Caco-2 (cell line): ENCODE measurements at regions of chr10 and their contacts with region 1.

Region 1: DNA sequence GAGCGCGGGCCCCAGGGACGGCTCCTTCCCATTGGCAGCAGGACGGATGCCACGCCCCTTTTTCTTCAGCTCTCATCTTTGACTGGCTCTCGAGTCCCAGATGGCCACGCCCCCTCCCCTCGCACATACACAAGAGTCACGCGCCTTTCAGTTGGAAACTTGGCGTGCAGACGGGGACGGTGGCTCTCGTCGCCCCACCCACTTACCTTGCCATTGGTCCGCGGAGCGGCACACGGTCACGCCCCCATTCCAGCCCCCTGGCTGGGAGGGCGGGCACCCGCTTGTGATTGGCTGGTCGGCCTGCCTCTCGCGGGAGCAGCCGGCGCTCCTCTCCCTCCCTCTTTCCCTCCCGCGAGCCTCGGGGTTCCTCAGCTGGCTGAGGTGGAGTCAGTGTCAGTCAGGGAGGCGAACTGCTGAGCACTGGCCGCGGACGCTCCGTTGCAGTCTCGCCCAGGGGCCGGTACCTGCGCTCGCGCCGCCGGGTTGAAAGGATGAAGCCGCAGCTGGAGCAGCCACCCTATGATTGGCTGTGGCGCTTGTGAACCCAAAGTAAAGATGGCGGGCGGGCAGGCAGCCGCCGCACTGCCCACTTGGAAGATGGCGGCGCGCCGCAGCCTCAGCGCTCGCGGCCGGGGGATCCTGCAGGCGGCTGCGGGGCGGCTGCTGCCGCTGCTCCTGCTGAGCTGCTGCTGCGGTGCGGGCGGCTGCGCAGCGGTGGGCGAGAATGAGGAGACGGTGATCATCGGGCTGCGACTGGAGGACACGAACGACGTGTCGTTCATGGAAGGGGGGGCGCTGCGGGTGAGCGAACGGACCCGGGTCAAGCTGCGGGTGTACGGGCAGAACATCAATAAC is at the start of gene CNNM2:
- DNase-seq: peak; percentile 100
- H3K4me3 ChIP-seq: peak within 1 kb of the TSS; percentile 87
- H3K4me3 Mint-ChIP-seq: peak within 1 kb of the TSS; percentile 74
- H3K27ac Mint-ChIP-seq: peak within 1 kb of the TSS; percentile 91
- H3K4me1 ChIP-seq: peaks cover 5% of the 10 kb centered on the region
- H3K4me1 Mint-ChIP-seq: peaks cover 24% of the 10 kb centered on the region
- H3K27me3 ChIP-seq: no peaks in the 10 kb centered on the region
- H3K27me3 Mint-ChIP-seq: no peaks in the 10 kb centered on the region
- CTCF ChIP-seq: no peak
- total RNA-seq, gene CNNM2: 14.1 and 16.1 TPM in 2 replicates

Region 2: GRCh38 chr10:101961591-101962498 is 956.3 kb before region 1 on chr10:
- CTCF ChIA-PET with region 1: no interaction called
- POLR2A ChIA-PET with region 1: no interaction called
- intact Hi-C with region 1: no loop called
- DNase-seq: no peak
- H3K4me3 ChIP-seq: no peak overlapping the region
- H3K4me3 Mint-ChIP-seq: no peak overlapping the region
- H3K27ac Mint-ChIP-seq: no peak overlapping the region
- H3K4me1 ChIP-seq: no peaks in the 10 kb centered on the region
- H3K4me1 Mint-ChIP-seq: no peaks in the 10 kb centered on the region
- H3K27me3 ChIP-seq: no peaks in the 10 kb centered on the region
- H3K27me3 Mint-ChIP-seq: no peaks in the 10 kb centered on the region
- CTCF ChIP-seq: no peak

Region 3: GRCh38 chr10:102467971-102468438 is 450.2 kb before region 1 on chr10:
- CTCF ChIA-PET with region 1: no interaction called
- POLR2A ChIA-PET with region 1: no interaction called
- intact Hi-C with region 1: no loop called
- DNase-seq: no peak
- H3K4me3 ChIP-seq: no peak overlapping the region
- H3K4me3 Mint-ChIP-seq: no peak overlapping the region
- H3K27ac Mint-ChIP-seq: no peak overlapping the region
- H3K4me1 ChIP-seq: peaks cover 11% of the 10 kb centered on the region
- H3K4me1 Mint-ChIP-seq: peaks cover 10% of the 10 kb centered on the region
- H3K27me3 ChIP-seq: no peaks in the 10 kb centered on the region
- H3K27me3 Mint-ChIP-seq: no peaks in the 10 kb centered on the region
- CTCF ChIP-seq: no peak

Region 4: DNA sequence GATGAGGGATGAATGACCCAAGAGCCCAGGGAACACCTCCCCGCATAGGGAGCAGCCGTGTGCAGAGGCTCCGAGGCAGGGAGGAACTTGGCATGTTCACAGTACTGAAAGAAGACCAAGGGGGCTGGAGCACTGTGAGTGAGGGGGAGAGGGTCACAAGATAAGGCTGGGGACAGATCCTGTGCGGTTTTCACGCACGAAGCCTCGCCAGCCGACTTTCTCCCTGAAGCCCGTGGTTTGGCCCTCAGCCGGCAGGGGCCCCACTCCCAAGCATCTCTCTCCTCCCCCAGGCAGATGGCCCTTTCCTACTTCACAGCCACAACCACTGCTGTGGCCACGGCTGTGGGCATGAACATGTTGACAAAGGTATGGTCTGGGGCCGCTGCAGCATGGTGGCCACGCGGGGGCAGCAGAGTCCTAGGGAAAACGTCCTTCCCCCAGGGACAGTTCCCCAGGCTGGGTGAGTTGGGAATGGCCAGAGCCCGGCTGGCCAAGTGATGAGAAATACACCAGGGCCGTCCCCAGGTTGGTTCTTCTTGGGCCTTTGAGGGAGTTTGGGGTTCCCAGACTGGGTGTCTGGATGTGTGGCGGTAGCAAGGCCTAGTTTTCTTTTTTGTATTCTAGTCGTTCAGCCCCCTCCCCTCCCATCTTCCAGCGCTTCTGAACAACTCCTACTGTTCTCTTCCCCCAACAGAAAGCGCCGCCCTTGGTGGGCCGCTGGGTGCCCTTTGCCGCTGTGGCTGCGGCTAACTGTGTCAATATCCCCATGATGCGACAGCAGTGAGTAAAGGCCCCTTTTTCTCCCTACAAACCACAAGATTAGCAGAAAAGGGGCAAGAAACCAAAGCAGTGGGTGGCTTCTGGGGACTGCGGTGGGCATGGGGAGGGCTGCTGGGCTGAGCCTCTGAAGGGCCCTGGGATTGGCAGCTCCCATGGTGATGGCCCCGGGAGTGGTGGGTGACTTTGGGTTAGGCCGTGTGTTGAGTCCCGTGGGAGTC is 188.9 kb before region 1 on chr10:
- CTCF ChIA-PET with region 1: no interaction called
- POLR2A ChIA-PET with region 1: interaction called, 5 read pairs
- intact Hi-C with region 1: loop called (anchors 1 kb)
- DNase-seq: peak; percentile 77 to 88
- H3K4me3 ChIP-seq: no peak overlapping the region
- H3K4me3 Mint-ChIP-seq: no peak overlapping the region
- H3K27ac Mint-ChIP-seq: peak overlapping the region; percentile 5
- H3K4me1 ChIP-seq: no peaks in the 10 kb centered on the region
- H3K4me1 Mint-ChIP-seq: no peaks in the 10 kb centered on the region
- H3K27me3 ChIP-seq: no peaks in the 10 kb centered on the region
- H3K27me3 Mint-ChIP-seq: no peaks in the 10 kb centered on the region
- CTCF ChIP-seq: peak; percentile 91 to 95

Region 5: DNA sequence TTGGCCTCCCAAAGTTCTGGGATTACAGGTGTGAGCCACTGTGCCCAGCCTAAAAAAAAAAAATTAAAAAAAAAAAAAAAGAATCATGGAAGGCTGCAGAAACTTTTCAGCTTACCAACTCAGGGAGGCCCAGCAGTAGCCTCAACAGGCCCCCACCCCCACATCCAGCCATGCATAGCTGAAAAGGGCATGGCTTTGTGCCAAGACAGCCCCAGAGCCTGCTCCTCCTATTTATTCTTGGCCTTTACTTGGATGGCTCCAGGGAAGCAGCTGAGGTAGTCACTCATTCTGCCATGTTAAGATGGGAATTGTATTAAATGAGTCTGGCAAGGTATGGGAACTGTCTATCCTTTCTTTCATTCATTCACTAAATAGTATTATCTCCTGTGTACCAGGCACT is 13.8 kb before region 1 on chr10:
- CTCF ChIA-PET with region 1: interaction called, 16 read pairs
- POLR2A ChIA-PET with region 1: no interaction called
- intact Hi-C with region 1: no loop called
- DNase-seq: no peak
- H3K4me3 ChIP-seq: no peak overlapping the region
- H3K4me3 Mint-ChIP-seq: no peak overlapping the region
- H3K27ac Mint-ChIP-seq: no peak overlapping the region
- H3K4me1 ChIP-seq: no peaks in the 10 kb centered on the region
- H3K4me1 Mint-ChIP-seq: no peaks in the 10 kb centered on the region
- H3K27me3 ChIP-seq: no peaks in the 10 kb centered on the region
- H3K27me3 Mint-ChIP-seq: no peaks in the 10 kb centered on the region
- CTCF ChIP-seq: no peak

Region 6: GRCh38 chr10:103053659-103054581 is 135.7 kb after region 1 on chr10:
- CTCF ChIA-PET with region 1: interaction called, 3 read pairs
- POLR2A ChIA-PET with region 1: no interaction called
- intact Hi-C with region 1: loop called (anchors 1 kb)
- DNase-seq: peak; percentile 61 to 75
- H3K4me3 ChIP-seq: no peak overlapping the region
- H3K4me3 Mint-ChIP-seq: peak overlapping the region; percentile 13
- H3K27ac Mint-ChIP-seq: no peak overlapping the region
- H3K4me1 ChIP-seq: peaks cover 7% of the 10 kb centered on the region; the same call in 1 of the 2 replicates
- H3K4me1 Mint-ChIP-seq: peaks cover 10% of the 10 kb centered on the region
- H3K27me3 ChIP-seq: no peaks in the 10 kb centered on the region
- H3K27me3 Mint-ChIP-seq: no peaks in the 10 kb centered on the region
- CTCF ChIP-seq: peak; percentile 34 to 63

Region 7: GRCh38 chr10:103069453-103070331 is 151.5 kb after region 1 on chr10:
- CTCF ChIA-PET with region 1: interaction called, 20 read pairs
- POLR2A ChIA-PET with region 1: no interaction called
- intact Hi-C with region 1: loop called (anchors 1 kb)
- DNase-seq: peak; percentile 65 to 78
- H3K4me3 ChIP-seq: no peak overlapping the region
- H3K4me3 Mint-ChIP-seq: no peak overlapping the region
- H3K27ac Mint-ChIP-seq: no peak overlapping the region
- H3K4me1 ChIP-seq: peaks cover 3% of the 10 kb centered on the region; the same call in 1 of the 2 replicates
- H3K4me1 Mint-ChIP-seq: no peaks in the 10 kb centered on the region
- H3K27me3 ChIP-seq: no peaks in the 10 kb centered on the region
- H3K27me3 Mint-ChIP-seq: no peaks in the 10 kb centered on the region
- CTCF ChIP-seq: peak; percentile 77 to 78

Region 8: GRCh38 chr10:103244663-103245271 is 326.6 kb after region 1 on chr10:
- CTCF ChIA-PET with region 1: interaction called, 24 read pairs
- POLR2A ChIA-PET with region 1: interaction called, 3 read pairs
- intact Hi-C with region 1: loop called (anchors 1 kb)
- DNase-seq: peak; percentile 67 to 76
- H3K4me3 ChIP-seq: no peak overlapping the region
- H3K4me3 Mint-ChIP-seq: no peak overlapping the region
- H3K27ac Mint-ChIP-seq: no peak overlapping the region
- H3K4me1 ChIP-seq: peaks cover 25% of the 10 kb centered on the region
- H3K4me1 Mint-ChIP-seq: peaks cover 26% of the 10 kb centered on the region
- H3K27me3 ChIP-seq: no peaks in the 10 kb centered on the region
- H3K27me3 Mint-ChIP-seq: no peaks in the 10 kb centered on the region
- CTCF ChIP-seq: peak; percentile 82 to 84

Region 9: DNA sequence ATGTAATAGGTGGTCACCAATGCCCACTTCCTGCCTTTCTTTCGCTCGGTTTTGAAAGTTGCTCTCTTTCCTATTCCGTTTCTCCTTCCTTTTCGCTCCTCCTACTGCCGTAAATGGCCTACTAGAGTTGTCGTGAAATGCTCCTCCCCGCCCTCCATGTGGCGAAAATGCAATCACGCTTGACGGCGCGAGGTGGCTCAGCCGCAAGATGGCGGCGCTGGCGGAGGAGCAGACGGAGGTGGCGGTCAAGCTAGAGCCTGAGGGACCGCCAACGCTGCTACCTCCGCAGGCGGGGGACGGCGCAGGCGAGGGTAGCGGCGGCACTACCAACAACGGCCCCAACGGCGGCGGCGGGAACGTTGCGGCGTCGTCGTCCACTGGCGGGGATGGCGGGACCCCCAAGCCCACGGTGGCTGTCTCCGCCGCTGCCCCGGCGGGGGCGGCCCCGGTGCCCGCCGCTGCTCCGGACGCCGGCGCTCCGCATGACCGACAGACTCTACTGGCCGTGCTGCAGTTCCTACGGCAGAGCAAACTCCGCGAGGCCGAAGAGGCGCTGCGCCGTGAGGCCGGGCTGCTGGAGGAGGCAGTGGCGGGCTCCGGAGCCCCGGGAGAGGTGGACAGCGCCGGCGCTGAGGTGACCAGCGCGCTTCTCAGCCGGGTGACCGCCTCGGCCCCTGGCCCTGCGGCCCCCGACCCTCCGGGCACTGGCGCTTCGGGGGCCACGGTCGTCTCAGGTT is 449.8 kb after region 1 on chr10 and contains the start of gene TAF5:
- CTCF ChIA-PET with region 1: no interaction called
- POLR2A ChIA-PET with region 1: no interaction called
- intact Hi-C with region 1: loop called (anchors 5 kb)
- DNase-seq: peak; percentile 94 to 95
- H3K4me3 ChIP-seq: peak within 1 kb of the TSS; percentile 82
- H3K4me3 Mint-ChIP-seq: peak within 1 kb of the TSS; percentile 97
- H3K27ac Mint-ChIP-seq: peak within 1 kb of the TSS; percentile 89
- H3K4me1 ChIP-seq: 0 out of 2 replicates have a peak, but pooled peaks cover 6% of the 10 kb centered on the region
- H3K4me1 Mint-ChIP-seq: no peaks in the 10 kb centered on the region
- H3K27me3 ChIP-seq: no peaks in the 10 kb centered on the region
- H3K27me3 Mint-ChIP-seq: no peaks in the 10 kb centered on the region
- CTCF ChIP-seq: no peak
- total RNA-seq, gene TAF5: 6.3 and 6.8 TPM in 2 replicates